GM10248 (cell line): ENCODE measurements at regions of chr11 and their contacts with region 1.

Region 1: GRCh38 chr11:72553706-72554105 is 119.4 kb upstream of the CLPB start:
- DNase-seq: no peak
- CTCF ChIP-seq: peak; percentile 38

Region 2: GRCh38 chr11:72525466-72525865 is 28.2 kb before region 1 on chr11:
- CTCF ChIA-PET with region 1: interaction called, 10 read pairs
- POLR2A ChIA-PET with region 1: no interaction called
- DNase-seq: no peak
- CTCF ChIP-seq: no peak

Region 3: DNA sequence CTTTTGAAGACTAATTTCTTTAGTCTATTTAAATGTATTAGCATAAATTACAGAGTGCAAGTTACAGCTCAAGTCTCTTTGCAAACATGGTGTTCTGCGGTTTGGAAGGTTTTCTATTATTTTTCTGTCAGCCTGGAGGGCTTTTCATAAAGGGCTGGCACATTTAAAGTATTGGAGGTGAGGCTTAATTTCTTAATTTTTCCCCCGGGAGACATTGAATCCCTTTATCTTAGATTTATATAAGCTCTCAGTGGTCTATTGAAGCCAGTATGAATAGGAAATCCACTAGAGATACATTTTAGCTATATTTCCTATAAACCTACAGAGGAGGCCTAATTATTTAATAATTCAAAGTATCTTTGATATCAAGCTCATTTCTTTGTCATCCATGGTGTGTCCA is 16.7 kb before region 1 on chr11:
- CTCF ChIA-PET with region 1: interaction called, 14 read pairs
- POLR2A ChIA-PET with region 1: no interaction called
- DNase-seq: no peak
- CTCF ChIP-seq: no peak

Region 4: DNA sequence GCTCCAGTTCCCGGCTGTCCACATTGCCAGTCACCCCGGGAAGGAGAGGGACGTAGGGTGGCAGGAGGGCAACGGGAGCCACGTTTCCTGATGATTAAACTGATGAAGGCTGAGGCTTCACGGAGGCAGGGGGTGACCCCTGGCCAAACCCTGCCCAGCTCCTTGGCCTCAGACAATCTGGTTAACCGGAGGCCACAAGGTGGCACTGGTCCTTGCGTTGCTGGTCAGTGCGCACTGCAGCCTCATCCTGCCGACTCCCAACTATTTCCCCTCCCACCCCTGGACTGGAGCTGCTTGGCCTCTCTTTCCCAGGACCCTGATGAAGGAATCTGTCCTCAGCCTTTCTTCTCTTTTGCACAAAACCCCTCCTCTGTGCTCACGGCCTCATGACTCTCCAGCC is 45.2 kb after region 1 on chr11:
- CTCF ChIA-PET with region 1: no interaction called
- POLR2A ChIA-PET with region 1: no interaction called
- DNase-seq: no peak
- CTCF ChIP-seq: peak; percentile 2